ENCODE measurements at regions of chr17 and their contacts with region 1.

Region 1: GRCh38 chr17:76414334-76415295 is 30.2 kb downstream of the SPHK1 start:
- DNase-seq: peak; percentile 94
- H3K4me3 ChIP-seq: no peak overlapping the region
- H3K27ac ChIP-seq: peak overlapping the region in 1 of 2 experiments; percentile 77; a peak in 2 of 4 replicates
- H3K4me1 ChIP-seq: peaks cover 0 to 44% of the 10 kb centered on the region in 2 experiments; a peak in 2 of 4 replicates
- H3K27me3 ChIP-seq: no peaks in the 10 kb centered on the region
- CTCF ChIP-seq: no peak
- EP300 ChIP-seq: peak in 1 of 2 experiments; percentile 78; a peak in 1 of 4 replicates
- RAD21 ChIP-seq: peak; percentile 24; the same call in 1 of the 2 replicates

Region 2: GRCh38 chr17:76437467-76438402 is 23.1 kb after region 1 on chr17:
- CTCF ChIA-PET with region 1: interaction called, 40 read pairs
- POLR2A ChIA-PET with region 1: no interaction called
- DNase-seq: no peak
- H3K4me3 ChIP-seq: no peak overlapping the region
- H3K27ac ChIP-seq: no peak overlapping the region
- H3K4me1 ChIP-seq: peaks cover 0 to 11% of the 10 kb centered on the region in 2 experiments; a peak in 2 of 4 replicates
- H3K27me3 ChIP-seq: no peaks in the 10 kb centered on the region
- CTCF ChIP-seq: no peak
- EP300 ChIP-seq: no peak
- RAD21 ChIP-seq: no peak

Region 3: DNA sequence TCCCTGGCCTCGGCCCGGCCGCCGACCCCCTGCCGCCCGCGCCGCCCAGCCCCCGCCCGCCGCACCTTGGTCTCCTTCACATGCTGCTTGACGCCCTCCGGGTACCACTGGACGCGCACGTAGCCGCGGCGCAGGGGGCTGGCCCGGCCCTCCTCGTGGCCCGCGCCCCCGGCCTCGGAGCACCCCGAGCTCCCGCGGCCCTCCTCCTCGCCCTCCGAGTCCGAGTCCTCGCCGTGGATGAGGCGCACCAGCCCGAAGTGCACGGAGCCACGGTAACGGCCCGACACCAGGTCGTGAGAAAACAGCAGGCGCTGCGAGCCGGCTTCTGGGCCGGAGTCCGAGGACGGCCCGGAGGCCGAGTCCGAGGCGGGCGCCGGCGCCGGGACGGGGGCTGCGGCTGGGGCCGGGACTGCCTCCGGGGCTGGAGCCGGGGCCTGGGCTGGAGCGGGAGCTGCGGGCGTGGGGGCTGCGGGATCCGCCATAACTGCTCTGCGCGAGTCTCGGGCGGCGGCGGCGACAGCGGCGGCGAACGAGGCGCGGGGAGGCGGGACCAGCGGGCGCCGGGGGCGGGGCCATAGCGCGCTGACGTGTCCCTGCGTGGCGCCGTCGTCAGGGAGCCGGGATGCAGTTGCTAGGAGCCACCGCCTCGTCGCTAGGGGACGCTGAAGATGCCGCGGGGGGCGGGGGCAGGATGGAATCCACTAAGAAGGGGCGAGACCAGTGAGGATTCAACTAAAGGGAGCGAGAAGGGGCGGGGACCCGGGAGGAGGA is 38.2 kb after region 1 on chr17 and contains the start of gene UBE2O:
- CTCF ChIA-PET with region 1: interaction called, 134 read pairs
- POLR2A ChIA-PET with region 1: interaction called, 7 read pairs
- DNase-seq: peak; percentile 100
- H3K4me3 ChIP-seq: peak within 1 kb of the TSS; percentile 74 to 95
- H3K27ac ChIP-seq: peak within 1 kb of the TSS; percentile 41 to 70
- H3K4me1 ChIP-seq: peaks cover 14 to 21% of the 10 kb centered on the region in 2 experiments
- H3K27me3 ChIP-seq: no peaks in the 10 kb centered on the region
- CTCF ChIP-seq: peak; percentile 64
- EP300 ChIP-seq: no peak; a peak in 1 of 4 replicates
- RAD21 ChIP-seq: no peak
- polyA plus RNA-seq, gene UBE2O: 20.0 and 25.4 TPM in 2 replicates

Region 4: DNA sequence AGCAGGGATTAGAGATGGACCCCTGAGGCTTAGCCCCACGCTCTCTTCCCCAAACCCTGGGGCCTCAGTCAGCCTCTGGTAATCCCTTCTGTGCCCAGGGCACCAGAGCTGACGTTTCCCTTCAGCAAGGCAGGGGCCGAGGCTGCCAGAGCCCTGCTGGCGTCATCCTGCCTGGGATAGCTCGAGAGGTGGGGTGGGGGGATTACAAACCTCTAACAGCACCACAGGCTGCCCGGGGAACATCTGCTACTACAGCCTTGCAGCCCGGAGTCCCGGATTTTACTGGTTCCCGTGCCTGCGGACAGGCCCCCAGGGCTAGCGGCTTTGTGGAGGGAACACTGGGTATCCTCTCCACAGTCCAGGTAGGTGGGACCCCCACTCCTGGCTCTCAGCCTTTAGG is 52.8 kb after region 1 on chr17 and contains the start of gene AANAT:
- CTCF ChIA-PET with region 1: interaction called, 20 read pairs
- POLR2A ChIA-PET with region 1: no interaction called
- DNase-seq: no peak
- H3K4me3 ChIP-seq: no peak within 1 kb of the TSS
- H3K27ac ChIP-seq: no peak within 1 kb of the TSS
- H3K4me1 ChIP-seq: no peaks in the 10 kb centered on the region; a peak in 1 of 4 replicates
- H3K27me3 ChIP-seq: no peaks in the 10 kb centered on the region
- CTCF ChIP-seq: no peak
- EP300 ChIP-seq: no peak
- RAD21 ChIP-seq: no peak
- polyA plus RNA-seq, gene AANAT: 0.26 TPM in 1 of 2 replicates, not detected in the other